Dendritic cell treated with granulocyte-macrophage colony-stimulating factor and Interleukin-4, amounts not matched to agents 40 ng/mL and 50 ng/mL, for 4 days (primary cell): ENCODE measurements at regions of chr11 and their contacts with region 1.

Region 1: DNA sequence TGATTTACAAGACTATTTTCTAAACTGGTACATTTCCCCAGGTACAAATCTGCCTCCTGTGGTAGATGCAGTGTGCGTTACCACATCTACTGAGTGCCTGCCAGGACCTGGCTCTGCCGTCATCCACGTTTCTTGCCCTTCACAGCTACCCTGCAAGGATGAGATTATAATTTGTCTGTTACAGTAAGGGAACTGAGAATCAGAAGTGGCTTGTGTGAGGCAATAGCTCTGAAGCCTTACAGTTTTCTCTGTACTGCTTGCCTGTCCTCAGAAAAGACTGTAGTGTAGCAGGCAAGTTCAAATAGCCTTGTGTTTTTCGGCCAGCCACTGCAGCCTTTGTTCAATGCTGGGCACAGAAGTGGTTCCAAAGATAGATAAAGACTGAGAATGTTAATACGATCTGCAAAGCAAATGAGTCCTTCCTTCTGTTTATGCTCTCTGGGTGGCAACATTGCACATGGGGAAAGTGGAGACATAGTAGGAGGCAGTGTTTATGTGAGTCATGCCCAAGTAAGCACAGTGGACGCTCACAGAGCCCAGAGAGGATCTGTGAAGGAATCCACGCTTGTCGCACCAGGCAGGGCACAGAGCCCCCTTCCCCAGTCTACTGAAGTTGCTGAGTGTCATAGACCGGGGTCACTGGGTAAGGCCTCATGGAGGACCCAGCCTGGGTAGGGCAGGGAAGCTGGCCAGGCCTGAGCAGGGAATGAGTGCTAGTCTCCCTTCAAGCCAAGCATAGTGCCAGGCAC is 49.1 kb downstream of the MICAL2 start:
- H3K4me3 Mint-ChIP-seq: peak overlapping the region; percentile 4
- H3K27ac Mint-ChIP-seq: peak overlapping the region; percentile 90
- H3K4me1 Mint-ChIP-seq: peaks cover 73% of the 10 kb centered on the region
- H3K27me3 Mint-ChIP-seq: no peaks in the 10 kb centered on the region

Region 2: GRCh38 chr11:12122083-12122482 is 37.4 kb before region 1 on chr11:
- intact Hi-C with region 1: loop called (anchors 5 kb)
- H3K4me3 Mint-ChIP-seq: no peak overlapping the region
- H3K27ac Mint-ChIP-seq: no peak overlapping the region
- H3K4me1 Mint-ChIP-seq: peaks cover 92% of the 10 kb centered on the region
- H3K27me3 Mint-ChIP-seq: no peaks in the 10 kb centered on the region

Region 3: GRCh38 chr11:12174477-12175143 is 15.1 kb after region 1 on chr11:
- intact Hi-C with region 1: loop called (anchors 1 kb)
- H3K4me3 Mint-ChIP-seq: peak overlapping the region; percentile 41
- H3K27ac Mint-ChIP-seq: peak overlapping the region; percentile 67
- H3K4me1 Mint-ChIP-seq: peaks cover 65% of the 10 kb centered on the region
- H3K27me3 Mint-ChIP-seq: no peaks in the 10 kb centered on the region

Region 4: GRCh38 chr11:12809864-12810567 is 650.5 kb after region 1 on chr11:
- intact Hi-C with region 1: no loop called
- H3K4me3 Mint-ChIP-seq: no peak overlapping the region
- H3K27ac Mint-ChIP-seq: no peak overlapping the region
- H3K4me1 Mint-ChIP-seq: no peaks in the 10 kb centered on the region
- H3K27me3 Mint-ChIP-seq: peaks cover 14% of the 10 kb centered on the region